SK-N-SH (cell line): ENCODE measurements at regions of chr20 and their contacts with region 1.

Region 1: DNA sequence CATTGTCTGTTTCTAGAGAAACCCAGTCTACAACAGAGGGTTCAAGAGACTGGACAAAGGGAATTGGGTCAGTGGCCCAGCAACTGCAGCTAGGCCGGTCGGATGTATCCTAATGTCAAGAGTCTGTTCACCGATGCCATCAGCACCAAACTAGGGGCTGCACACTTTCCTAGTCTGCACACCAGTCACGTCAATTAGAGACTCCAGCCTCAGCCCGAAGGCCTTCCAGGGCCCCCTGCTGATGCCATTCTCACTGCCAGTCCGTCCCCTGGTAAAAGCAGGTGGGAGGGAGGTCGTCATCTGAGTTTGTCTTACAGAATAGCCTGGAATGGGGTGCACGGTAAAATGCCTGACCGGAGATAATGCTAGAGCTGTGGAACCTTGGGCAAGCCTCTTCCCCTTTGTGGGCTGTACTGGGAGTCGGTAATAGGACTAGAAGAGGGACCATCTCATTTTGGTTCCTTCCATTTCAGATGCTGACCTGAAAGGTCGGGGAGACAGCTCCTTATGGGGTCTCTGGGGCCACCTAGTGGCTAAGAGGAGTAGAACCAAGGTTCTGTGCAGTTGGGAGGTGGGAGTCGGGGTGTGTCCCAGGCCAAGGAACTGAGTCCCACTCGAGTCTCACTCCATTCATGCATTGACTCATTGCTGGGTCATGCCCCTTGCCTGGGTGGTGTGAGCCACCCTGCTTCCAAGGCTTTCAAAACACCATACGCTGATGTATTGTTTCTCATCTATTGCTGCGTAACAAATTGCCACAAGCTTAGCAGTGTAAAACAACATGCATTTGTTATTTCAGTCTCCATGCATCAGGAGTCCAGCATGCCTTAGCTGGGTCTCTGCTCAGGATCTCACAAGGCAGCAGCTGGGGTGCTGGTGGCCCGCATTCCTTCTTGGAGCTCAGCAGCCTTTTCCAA is 5.1 kb downstream of the SOX12 start:
- DNase-seq: peak; percentile 72
- H3K4me3 ChIP-seq: peak overlapping the region in 1 of 2 experiments; percentile 23; a peak in 1 of 4 replicates
- H3K27ac ChIP-seq: peak overlapping the region; percentile 11 to 55; a peak in 1 of 4 replicates
- H3K4me1 ChIP-seq: peaks cover 22 to 31% of the 10 kb centered on the region in 2 experiments; a peak in 3 of 4 replicates
- H3K27me3 ChIP-seq: no peaks in the 10 kb centered on the region
- CTCF ChIP-seq: peak; percentile 90
- EP300 ChIP-seq: no peak
- RAD21 ChIP-seq: peak; percentile 83

Region 2: GRCh38 chr20:208942-209566 is 121.4 kb before region 1 on chr20:
- CTCF ChIA-PET with region 1: interaction called, 15 read pairs
- POLR2A ChIA-PET with region 1: no interaction called
- DNase-seq: peak; percentile 41
- H3K4me3 ChIP-seq: no peak overlapping the region; a peak in 1 of 4 replicates
- H3K27ac ChIP-seq: no peak overlapping the region
- H3K4me1 ChIP-seq: no peaks in the 10 kb centered on the region
- H3K27me3 ChIP-seq: no peaks in the 10 kb centered on the region
- CTCF ChIP-seq: peak; percentile 69
- EP300 ChIP-seq: no peak
- RAD21 ChIP-seq: peak; percentile 83

Region 3: GRCh38 chr20:297098-297924 is 33.2 kb before region 1 on chr20 and contains the start of gene ZCCHC3:
- CTCF ChIA-PET with region 1: interaction called, 23 read pairs
- POLR2A ChIA-PET with region 1: interaction called, 29 read pairs
- DNase-seq: peak; percentile 96
- H3K4me3 ChIP-seq: peak within 1 kb of the TSS; percentile 87 to 93
- H3K27ac ChIP-seq: peak within 1 kb of the TSS; percentile 86 to 95
- H3K4me1 ChIP-seq: peaks cover 20 to 24% of the 10 kb centered on the region in 2 experiments
- H3K27me3 ChIP-seq: no peaks in the 10 kb centered on the region
- CTCF ChIP-seq: peak; percentile 21; the same call in 1 of the 2 replicates
- EP300 ChIP-seq: peak in 1 of 2 experiments; percentile 26; a peak in 1 of 4 replicates
- RAD21 ChIP-seq: peak; percentile 31
- polyA plus RNA-seq, gene ZCCHC3: 9.0 and 9.5 TPM in 2 replicates

Region 4: DNA sequence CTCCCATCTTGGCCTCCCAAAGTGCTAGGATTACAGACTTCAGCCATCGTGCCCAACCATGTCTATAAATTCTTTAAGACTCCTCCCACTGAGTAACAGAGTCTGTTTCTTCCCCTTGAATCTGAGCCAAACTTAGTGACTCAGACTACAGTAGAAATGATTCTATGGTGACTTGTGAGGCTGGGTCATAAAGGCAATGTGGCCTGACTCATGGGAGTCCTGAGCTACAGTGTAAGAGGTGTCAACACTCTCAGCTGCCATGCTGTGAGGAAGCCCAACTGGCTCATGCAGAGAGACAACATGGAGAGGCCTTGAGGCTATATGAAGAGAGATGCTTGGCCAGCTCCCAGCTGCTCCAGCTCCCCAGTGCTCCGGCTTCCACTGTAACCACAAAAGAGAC is 11.2 kb after region 1 on chr20:
- CTCF ChIA-PET with region 1: interaction called, 65 read pairs
- POLR2A ChIA-PET with region 1: interaction called, 39 read pairs
- DNase-seq: no peak
- H3K4me3 ChIP-seq: no peak overlapping the region
- H3K27ac ChIP-seq: peak overlapping the region in 1 of 2 experiments; percentile 16; a peak in 1 of 4 replicates
- H3K4me1 ChIP-seq: peaks cover 0 to 6% of the 10 kb centered on the region in 2 experiments; a peak in 1 of 4 replicates
- H3K27me3 ChIP-seq: no peaks in the 10 kb centered on the region
- CTCF ChIP-seq: no peak
- EP300 ChIP-seq: no peak
- RAD21 ChIP-seq: no peak

Region 5: DNA sequence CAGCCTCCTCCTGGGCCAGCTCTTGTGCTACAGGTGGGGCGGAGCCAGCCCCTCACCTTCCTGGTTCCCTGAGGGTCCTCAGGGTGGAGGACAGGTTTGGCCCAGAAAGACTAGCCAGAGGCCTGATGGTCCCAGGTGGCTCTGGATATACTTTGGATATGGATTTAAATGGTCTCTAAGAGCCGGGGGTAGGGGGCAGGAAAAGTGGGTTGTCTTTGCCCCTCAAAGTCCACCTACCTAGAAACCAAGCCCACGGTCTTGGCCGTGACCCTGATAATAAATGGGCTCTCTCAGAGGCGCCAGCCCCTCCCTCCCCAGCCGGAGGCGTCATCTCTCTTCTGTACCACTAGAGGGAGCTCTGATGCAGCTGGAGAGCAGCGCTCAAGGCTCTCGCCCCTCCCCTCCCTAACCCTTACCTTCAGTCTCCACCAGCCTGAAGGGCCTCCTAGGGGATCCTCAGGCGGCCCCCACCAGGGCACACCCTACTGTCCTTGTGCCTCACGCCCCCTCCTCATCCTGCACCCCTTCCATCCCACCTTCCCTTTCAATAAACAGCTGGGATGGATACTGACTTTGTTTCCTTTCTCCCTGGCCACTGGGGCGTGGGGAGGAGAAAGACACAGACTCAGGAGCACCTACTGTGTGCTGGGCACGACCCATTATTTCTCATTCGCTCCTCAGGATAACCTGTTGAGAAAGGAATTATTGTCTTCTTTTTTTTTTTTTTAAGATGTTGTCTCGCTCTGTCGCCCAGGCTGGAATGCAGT is 24.0 kb after region 1 on chr20:
- CTCF ChIA-PET with region 1: interaction called, 65 read pairs
- POLR2A ChIA-PET with region 1: no interaction called
- DNase-seq: peak; percentile 90
- H3K4me3 ChIP-seq: peak overlapping the region in 1 of 2 experiments; percentile 54; a peak in 1 of 4 replicates
- H3K27ac ChIP-seq: no peak overlapping the region; a peak in 1 of 4 replicates
- H3K4me1 ChIP-seq: no peaks in the 10 kb centered on the region; a peak in 1 of 4 replicates
- H3K27me3 ChIP-seq: no peaks in the 10 kb centered on the region
- CTCF ChIP-seq: peak; percentile 91
- EP300 ChIP-seq: no peak
- RAD21 ChIP-seq: peak; percentile 96